ENCODE measurements at regions of chr5 and their contacts with region 1.

Region 1: GRCh38 chr5:140833997-140834723 is at the start of gene PCDHA7:
- DNase-seq: no peak
- ATAC-seq: no peak
- H3K4me3 ChIP-seq: peak within 1 kb of the TSS in 5 of 12 donors; percentile 18 to 41 (median 34)
- H3K27ac ChIP-seq: no peak within 1 kb of the TSS
- H3K4me1 ChIP-seq: no peaks in the 10 kb centered on the region
- H3K27me3 ChIP-seq: peaks cover 9 to 90% (median 26%) of the 10 kb centered on the region in 9 donors
- CTCF ChIP-seq: peak in 5 of 12 donors; percentile 9 to 33 (median 23)
- POLR2A ChIP-seq: no peak
- total RNA-seq, gene PCDHA7: 0.11 to 0.27 (median 0.20) TPM in 4 of 9 donors, not detected in the others

Region 2: GRCh38 chr5:140468188-140468587 is 366.0 kb before region 1 on chr5:
- intact Hi-C with region 1: no loop called
- DNase-seq: no peak
- ATAC-seq: peak in 2 of 4 donors; percentile 69 to 86
- H3K4me3 ChIP-seq: no peak overlapping the region
- H3K27ac ChIP-seq: no peak overlapping the region
- H3K4me1 ChIP-seq: peaks cover 0 to 8% (median 2%) of the 10 kb centered on the region in 12 donors
- H3K27me3 ChIP-seq: no peaks in the 10 kb centered on the region
- CTCF ChIP-seq: no peak
- POLR2A ChIP-seq: no peak

Region 3: DNA sequence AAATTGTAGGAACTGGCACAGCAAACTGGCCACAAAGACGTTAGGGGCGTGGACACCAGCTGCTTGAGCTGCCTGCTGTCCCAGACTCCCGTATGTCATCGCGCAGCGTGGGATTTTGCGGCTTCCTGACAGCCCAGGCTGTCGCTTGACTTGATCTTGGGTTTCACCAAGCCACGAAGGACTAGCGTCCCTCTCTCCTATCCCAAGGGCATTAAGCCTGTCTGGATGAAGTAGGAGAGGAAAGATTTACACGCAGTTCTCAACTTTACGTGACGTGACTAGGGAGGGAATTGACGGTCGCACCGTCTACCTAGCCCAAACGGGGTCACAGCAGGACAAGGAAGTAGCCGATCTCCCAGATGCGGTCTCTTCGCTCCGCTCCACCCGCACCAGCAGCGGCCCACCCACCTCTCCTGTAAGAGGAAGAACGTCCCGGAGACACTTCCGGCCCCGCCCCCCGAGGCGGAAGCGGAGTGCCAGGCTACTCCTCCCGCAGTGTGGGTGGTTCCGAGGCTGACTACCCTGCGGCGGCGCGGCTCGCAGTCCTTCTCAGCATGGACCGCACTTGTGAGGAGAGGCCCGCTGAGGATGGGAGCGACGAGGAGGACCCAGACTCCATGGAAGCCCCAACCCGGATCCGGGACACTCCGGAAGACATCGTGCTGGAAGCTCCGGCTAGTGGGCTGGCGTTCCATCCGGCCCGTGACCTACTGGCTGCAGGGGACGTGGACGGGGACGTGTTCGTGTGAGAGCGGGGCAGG is 169.6 kb before region 1 on chr5 and contains the start of gene WDR55:
- intact Hi-C with region 1: no loop called
- DNase-seq: peak; percentile 96 to 98 (median 97)
- ATAC-seq: peak; percentile 98 to 99 (median 98)
- H3K4me3 ChIP-seq: peak within 1 kb of the TSS; percentile 50 to 98 (median 90)
- H3K27ac ChIP-seq: peak within 1 kb of the TSS; percentile 90 to 99 (median 94)
- H3K4me1 ChIP-seq: peaks cover 0 to 34% (median 27%) of the 10 kb centered on the region in 12 donors
- H3K27me3 ChIP-seq: no peaks in the 10 kb centered on the region
- CTCF ChIP-seq: no peak
- POLR2A ChIP-seq: peak; percentile 54 to 80
- total RNA-seq, gene WDR55: 9.6 to 17.5 (median 12.2) TPM

Region 4: GRCh38 chr5:141050622-141051525 is 216.7 kb after region 1 on chr5 and contains the start of gene PCDHB1:
- intact Hi-C with region 1: loop called in 2 of 10 experiments (anchors 10 kb)
- DNase-seq: no peak
- ATAC-seq: no peak
- H3K4me3 ChIP-seq: peak within 1 kb of the TSS in 11 of 12 donors; percentile 24 to 62 (median 50)
- H3K27ac ChIP-seq: no peak within 1 kb of the TSS
- H3K4me1 ChIP-seq: peaks cover 0 to 14% (median 0%) of the 10 kb centered on the region in 12 donors
- H3K27me3 ChIP-seq: peaks cover 0 to 91% (median 16%) of the 10 kb centered on the region in 9 donors
- CTCF ChIP-seq: no peak
- POLR2A ChIP-seq: no peak
- total RNA-seq, gene PCDHB1: 0.04 to 0.05 TPM in 2 of 9 donors, not detected in the others

Measured in heart left ventricle (tissue), 16 donors.